GM12878 (cell line): ENCODE measurements at regions of chr5 and their contacts with region 1.

Region 1: GRCh38 chr5:114449860-114450421 is 88.1 kb downstream of the KCNN2 start:
- DNase-seq: peak; percentile 60
- ATAC-seq: peak; percentile 97
- H3K4me3 ChIP-seq: no peak overlapping the region
- H3K27ac ChIP-seq: no peak overlapping the region
- H3K4me1 ChIP-seq: no peaks in the 10 kb centered on the region
- H3K27me3 ChIP-seq: no peaks in the 10 kb centered on the region
- CTCF ChIP-seq: peak; percentile 84 to 98 (median 89)
- EP300 ChIP-seq: no peak
- POLR2A ChIP-seq: no peak
- RAD21 ChIP-seq: peak; percentile 87

Region 2: DNA sequence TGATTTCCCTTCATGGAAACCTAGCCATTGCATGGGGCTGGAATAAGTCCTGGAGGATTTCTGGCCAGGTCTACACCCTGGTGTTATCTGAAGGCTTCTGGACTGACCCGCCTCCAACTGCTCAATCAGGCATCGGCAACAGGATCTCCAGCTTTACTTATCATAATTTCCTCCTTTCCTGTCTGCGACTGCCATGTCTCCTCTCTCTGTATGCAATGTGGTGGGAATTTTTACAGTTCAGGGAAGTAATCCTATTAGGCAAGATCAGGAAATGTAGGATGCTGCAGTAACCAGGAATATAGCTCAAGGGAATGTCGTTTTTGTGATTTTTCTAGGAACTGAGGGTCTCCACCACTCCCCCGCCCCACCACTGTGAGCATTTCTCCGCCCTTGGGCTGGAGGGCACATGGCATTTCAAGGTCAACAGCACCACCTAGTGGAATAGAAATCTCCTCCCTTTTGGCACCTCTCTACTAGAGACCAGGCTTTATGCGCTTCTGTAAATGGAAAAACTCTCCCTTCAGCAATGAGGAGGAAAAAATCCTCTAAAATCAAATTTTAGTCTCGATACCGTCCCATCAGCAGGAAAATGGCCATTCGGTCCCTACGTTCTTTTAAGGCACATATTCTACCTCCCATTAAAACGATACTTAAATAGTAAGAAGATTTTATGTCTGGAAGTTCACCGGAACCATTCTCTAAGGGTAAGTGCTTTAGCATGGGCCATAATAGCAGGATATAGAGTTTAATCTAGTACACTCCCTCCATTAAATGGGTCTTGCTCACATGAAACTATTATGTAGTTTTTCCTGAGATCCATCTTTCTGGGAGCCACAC is 843.4 kb before region 1 on chr5:
- CTCF ChIA-PET with region 1: interaction called, 20 read pairs
- POLR2A ChIA-PET with region 1: no interaction called
- RAD21 ChIA-PET with region 1: no interaction called
- SMC1A ChIA-PET with region 1: interaction called, 9 read pairs
- in situ Hi-C with region 1: loop called (anchors 5 kb)
- intact Hi-C with region 1: no loop called
- DNase-seq: peak; percentile 7
- ATAC-seq: peak; percentile 98
- H3K4me3 ChIP-seq: no peak overlapping the region
- H3K27ac ChIP-seq: no peak overlapping the region
- H3K4me1 ChIP-seq: no peaks in the 10 kb centered on the region
- H3K27me3 ChIP-seq: no peaks in the 10 kb centered on the region
- CTCF ChIP-seq: peak; percentile 63 to 82 (median 73)
- EP300 ChIP-seq: no peak
- POLR2A ChIP-seq: no peak
- RAD21 ChIP-seq: peak; percentile 96

Region 3: GRCh38 chr5:114101153-114101552 is 348.8 kb before region 1 on chr5:
- CTCF ChIA-PET with region 1: interaction called, 7 read pairs
- POLR2A ChIA-PET with region 1: no interaction called
- RAD21 ChIA-PET with region 1: interaction called, 5 read pairs
- SMC1A ChIA-PET with region 1: interaction called, 10 read pairs
- in situ Hi-C with region 1: loop called (anchors 10 kb)
- intact Hi-C with region 1: loop called (anchors 1 kb)
- DNase-seq: no peak
- ATAC-seq: peak; percentile 86
- H3K4me3 ChIP-seq: no peak overlapping the region
- H3K27ac ChIP-seq: no peak overlapping the region
- H3K4me1 ChIP-seq: no peaks in the 10 kb centered on the region
- H3K27me3 ChIP-seq: no peaks in the 10 kb centered on the region
- CTCF ChIP-seq: peak; percentile 42 to 54 (median 47); a peak in 5 of 6 replicates
- EP300 ChIP-seq: no peak
- POLR2A ChIP-seq: no peak
- RAD21 ChIP-seq: peak; percentile 70

Region 4: DNA sequence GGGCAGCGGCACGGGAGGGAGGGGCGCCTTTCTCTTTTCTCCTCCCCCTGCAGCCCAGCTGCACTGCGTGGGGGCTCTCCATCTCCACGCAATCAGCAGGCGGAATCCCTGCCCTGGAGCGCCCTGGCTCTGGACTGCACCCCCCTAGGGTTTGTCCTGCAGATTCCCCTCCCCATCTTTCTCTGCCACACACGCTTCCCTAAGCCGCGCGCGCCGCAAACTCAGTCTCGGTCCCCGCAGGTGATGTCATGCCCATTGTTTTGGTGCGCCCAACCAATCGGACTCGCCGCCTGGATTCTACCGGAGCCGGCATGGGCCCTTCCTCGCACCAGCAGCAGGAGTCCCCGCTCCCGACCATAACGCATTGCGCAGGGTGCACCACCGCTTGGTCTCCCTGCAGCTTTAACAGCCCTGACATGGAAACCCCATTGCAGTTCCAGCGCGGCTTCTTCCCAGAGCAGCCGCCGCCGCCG is 88.2 kb before region 1 on chr5 and contains the start of gene KCNN2:
- CTCF ChIA-PET with region 1: interaction called, 347 read pairs
- POLR2A ChIA-PET with region 1: interaction called, 16 read pairs
- RAD21 ChIA-PET with region 1: interaction called, 318 read pairs
- SMC1A ChIA-PET with region 1: interaction called, 297 read pairs
- in situ Hi-C with region 1: loop called (anchors 5 kb)
- intact Hi-C with region 1: loop called (anchors 1 kb)
- DNase-seq: peak; percentile 26
- ATAC-seq: peak; percentile 75
- H3K4me3 ChIP-seq: peak within 1 kb of the TSS; percentile 44; the same call in 1 of the 2 replicates
- H3K27ac ChIP-seq: no peak within 1 kb of the TSS
- H3K4me1 ChIP-seq: no peaks in the 10 kb centered on the region
- H3K27me3 ChIP-seq: peaks cover 0 to 18% of the 10 kb centered on the region in 2 experiments; a peak in 2 of 4 replicates
- CTCF ChIP-seq: no peak
- EP300 ChIP-seq: no peak
- POLR2A ChIP-seq: no peak
- RAD21 ChIP-seq: no peak
- polyA plus RNA-seq, gene KCNN2: 0.47 to 0.60 TPM

Region 5: DNA sequence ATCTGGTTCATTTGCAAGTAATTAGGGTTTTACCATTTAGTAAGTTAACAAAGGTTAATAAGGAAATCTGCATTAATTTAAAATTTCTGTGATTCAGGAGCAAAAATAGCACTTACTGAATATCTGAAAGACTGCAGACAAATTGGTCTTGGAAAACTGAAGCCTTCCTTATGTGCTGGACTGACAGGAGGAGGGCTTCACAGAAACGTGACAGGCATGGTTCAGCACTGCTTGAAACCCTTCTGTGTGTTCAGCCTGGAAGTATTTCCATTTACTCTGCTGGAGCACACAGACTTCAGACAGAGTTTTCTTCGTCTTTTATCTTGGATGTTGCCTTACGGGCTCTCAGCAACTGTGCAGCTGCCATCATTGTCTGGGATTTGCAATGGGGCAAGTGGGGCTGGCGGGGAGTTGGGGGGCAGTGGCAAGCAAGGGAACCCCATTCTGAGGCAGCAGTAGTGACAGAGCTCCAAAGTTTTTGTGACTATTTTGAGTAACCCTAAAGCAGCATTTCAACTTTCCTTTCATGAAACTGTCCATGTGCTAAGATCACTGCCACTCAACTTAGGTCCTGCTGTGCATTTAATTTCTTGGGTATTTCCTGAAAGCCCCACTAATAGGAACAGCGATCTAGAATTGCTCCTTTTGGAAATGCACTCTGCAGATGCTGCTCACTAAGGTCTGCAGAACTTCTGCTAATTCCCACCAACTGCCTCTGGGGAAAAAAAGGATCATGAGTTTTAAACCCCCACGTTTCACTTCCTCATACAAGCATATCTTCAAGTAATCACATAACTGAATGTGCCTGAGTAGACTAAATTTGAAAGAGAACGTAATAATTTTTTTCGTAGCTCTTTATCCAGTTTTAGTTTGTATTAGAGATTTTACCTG is 31.5 kb before region 1 on chr5:
- CTCF ChIA-PET with region 1: interaction called, 42 read pairs
- POLR2A ChIA-PET with region 1: interaction called, 6 read pairs
- RAD21 ChIA-PET with region 1: interaction called, 61 read pairs
- SMC1A ChIA-PET with region 1: interaction called, 133 read pairs
- in situ Hi-C with region 1: no loop called
- intact Hi-C with region 1: no loop called
- DNase-seq: peak; percentile 56
- ATAC-seq: peak; percentile 91
- H3K4me3 ChIP-seq: 0 out of 2 replicates have a peak overlapping the region, but pooled peaks have one; percentile 3
- H3K27ac ChIP-seq: peak overlapping the region; percentile 43; the same call in 1 of the 2 replicates
- H3K4me1 ChIP-seq: no peaks in the 10 kb centered on the region
- H3K27me3 ChIP-seq: no peaks in the 10 kb centered on the region
- CTCF ChIP-seq: no peak
- EP300 ChIP-seq: peak; percentile 94 to 96
- POLR2A ChIP-seq: no peak
- RAD21 ChIP-seq: peak; percentile 24; the same call in 1 of the 2 replicates

Region 6: GRCh38 chr5:114467729-114468128 is 17.8 kb after region 1 on chr5:
- CTCF ChIA-PET with region 1: interaction called, 58 read pairs
- POLR2A ChIA-PET with region 1: no interaction called
- RAD21 ChIA-PET with region 1: interaction called, 6 read pairs
- SMC1A ChIA-PET with region 1: interaction called, 44 read pairs
- in situ Hi-C with region 1: no loop called
- intact Hi-C with region 1: no loop called
- DNase-seq: no peak
- ATAC-seq: peak; percentile 52
- H3K4me3 ChIP-seq: no peak overlapping the region
- H3K27ac ChIP-seq: no peak overlapping the region
- H3K4me1 ChIP-seq: no peaks in the 10 kb centered on the region
- H3K27me3 ChIP-seq: no peaks in the 10 kb centered on the region
- CTCF ChIP-seq: no peak
- EP300 ChIP-seq: no peak
- POLR2A ChIP-seq: no peak
- RAD21 ChIP-seq: no peak

Region 7: GRCh38 chr5:115246361-115246991 is 796.5 kb after region 1 on chr5:
- CTCF ChIA-PET with region 1: no interaction called
- POLR2A ChIA-PET with region 1: no interaction called
- RAD21 ChIA-PET with region 1: interaction called, 4 read pairs
- SMC1A ChIA-PET with region 1: no interaction called
- in situ Hi-C with region 1: loop called (anchors 25 kb)
- intact Hi-C with region 1: no loop called
- DNase-seq: peak; percentile 7
- ATAC-seq: peak; percentile 85
- H3K4me3 ChIP-seq: no peak overlapping the region
- H3K27ac ChIP-seq: no peak overlapping the region
- H3K4me1 ChIP-seq: no peaks in the 10 kb centered on the region
- H3K27me3 ChIP-seq: no peaks in the 10 kb centered on the region
- CTCF ChIP-seq: peak; percentile 57 to 75 (median 64); a peak in 5 of 6 replicates
- EP300 ChIP-seq: no peak
- POLR2A ChIP-seq: no peak
- RAD21 ChIP-seq: peak; percentile 81